ENCODE measurements at regions of chr9 and their contacts with region 1.

Region 1: DNA sequence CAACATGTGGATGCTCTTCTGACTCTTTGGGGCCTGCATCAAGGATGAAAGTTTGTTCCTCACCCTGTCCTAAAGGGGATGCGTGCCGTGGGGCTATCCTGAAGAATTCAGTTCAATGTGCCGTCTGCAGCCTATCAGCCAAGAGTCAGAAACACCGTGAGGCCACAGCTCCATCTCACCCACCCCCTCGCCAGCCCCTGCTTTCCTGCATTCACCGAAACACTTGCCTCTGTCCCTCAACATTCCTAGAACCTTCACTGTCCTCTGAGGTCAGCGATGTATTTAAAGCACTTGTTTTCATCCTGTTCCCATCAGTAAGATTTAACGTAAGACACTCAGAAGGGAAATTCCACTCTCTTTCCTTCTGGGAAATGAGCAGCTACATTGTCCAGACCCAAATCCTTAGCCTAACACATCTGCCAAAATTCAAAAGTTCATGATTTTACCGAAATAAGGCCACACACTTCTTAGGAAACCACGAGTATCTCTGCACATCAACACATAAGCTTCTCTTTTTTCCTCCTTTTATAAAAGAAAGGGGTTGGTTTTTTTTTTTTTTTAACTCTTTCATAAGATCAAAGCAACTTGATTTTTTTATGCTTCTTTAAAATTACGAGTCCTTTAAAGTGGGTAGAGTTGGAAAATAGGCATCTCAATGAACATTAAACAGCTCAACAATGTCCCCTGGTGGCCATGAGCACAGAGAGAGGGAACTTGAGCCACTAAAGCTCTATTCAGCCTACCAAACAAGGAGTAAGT is 100.7 kb downstream of the SUSD1 start:
- DNase-seq: peak; percentile 64
- H3K4me3 ChIP-seq: no peak overlapping the region
- H3K27ac ChIP-seq: peak overlapping the region in 1 of 2 donors; percentile 6
- H3K4me1 ChIP-seq: no peaks in the 10 kb centered on the region
- H3K27me3 ChIP-seq: no peaks in the 10 kb centered on the region
- CTCF ChIP-seq: peak; percentile 84 to 90 (median 88)
- POLR2A ChIP-seq: no peak

Region 2: DNA sequence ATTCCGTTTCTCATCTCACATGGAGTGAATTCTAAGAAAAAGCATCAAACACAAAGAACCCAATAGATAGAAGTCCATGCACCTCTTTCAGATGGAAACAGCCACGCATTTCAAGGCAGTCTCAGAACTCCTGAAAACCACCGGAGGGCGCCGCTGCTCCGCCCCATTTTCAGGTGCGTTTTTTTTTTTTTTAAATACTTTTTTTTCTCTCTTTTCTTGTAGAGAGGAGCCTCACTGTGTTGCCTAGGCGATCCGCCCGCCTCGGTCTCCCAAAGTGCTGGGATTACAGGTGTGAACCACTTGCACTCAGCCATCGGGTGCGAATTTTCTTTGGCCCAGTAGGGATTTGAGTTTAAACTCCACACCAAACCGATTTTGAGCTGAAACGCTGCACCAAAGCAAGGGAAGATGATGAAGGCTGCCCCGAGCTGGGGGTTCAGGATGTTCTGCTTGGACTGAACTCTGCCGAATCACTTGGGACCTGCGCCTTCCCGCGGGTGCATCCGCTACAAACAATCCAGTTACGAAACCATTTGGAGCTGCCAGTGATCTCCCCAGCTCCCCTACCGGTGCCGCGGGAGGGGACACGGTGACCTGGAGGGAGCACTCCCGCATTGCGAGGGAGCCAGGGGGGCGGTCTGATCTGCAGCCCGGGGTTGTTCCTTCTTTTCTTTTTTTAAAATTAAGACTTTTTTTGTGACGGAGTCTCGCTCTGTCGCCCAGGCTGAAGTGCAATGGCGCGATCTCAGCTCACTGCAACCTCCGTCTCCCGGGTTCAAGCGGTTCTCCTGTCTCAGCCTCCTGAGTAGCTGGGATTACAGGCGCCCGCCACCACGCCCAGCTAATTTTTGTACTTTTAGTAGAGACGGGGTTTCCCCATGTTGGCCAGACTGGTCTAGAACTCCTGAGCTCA is 476.4 kb before region 1 on chr9:
- intact Hi-C with region 1: loop called (anchors 10 kb)
- DNase-seq: peak; percentile 49
- H3K4me3 ChIP-seq: peak overlapping the region; percentile 62 to 74
- H3K27ac ChIP-seq: peak overlapping the region; percentile 87 to 90
- H3K4me1 ChIP-seq: no peaks in the 10 kb centered on the region
- H3K27me3 ChIP-seq: no peaks in the 10 kb centered on the region
- CTCF ChIP-seq: peak; percentile 42 to 75 (median 68)
- POLR2A ChIP-seq: no peak

Region 3: GRCh38 chr9:111759762-111760639 is 314.4 kb before region 1 on chr9:
- intact Hi-C with region 1: loop called (anchors 2 kb)
- DNase-seq: peak; percentile 61
- H3K4me3 ChIP-seq: no peak overlapping the region
- H3K27ac ChIP-seq: no peak overlapping the region
- H3K4me1 ChIP-seq: no peaks in the 10 kb centered on the region
- H3K27me3 ChIP-seq: no peaks in the 10 kb centered on the region
- CTCF ChIP-seq: peak in 3 of 4 experiments; percentile 70 to 87 (median 82)
- POLR2A ChIP-seq: no peak

Region 4: GRCh38 chr9:111896353-111896958 is 178.0 kb before region 1 on chr9 and contains the start of gene UGCG:
- intact Hi-C with region 1: loop called (anchors 5 kb)
- DNase-seq: peak; percentile 84
- H3K4me3 ChIP-seq: peak within 1 kb of the TSS; percentile 96 to 98
- H3K27ac ChIP-seq: peak within 1 kb of the TSS; percentile 95
- H3K4me1 ChIP-seq: no peaks in the 10 kb centered on the region
- H3K27me3 ChIP-seq: no peaks in the 10 kb centered on the region
- CTCF ChIP-seq: peak in 2 of 4 experiments; percentile 10 to 15
- POLR2A ChIP-seq: peak; percentile 96
- total RNA-seq, gene UGCG: 23.9 to 42.6 TPM